ENCODE measurements at regions of chr5 and their contacts with region 1.

Region 1: DNA sequence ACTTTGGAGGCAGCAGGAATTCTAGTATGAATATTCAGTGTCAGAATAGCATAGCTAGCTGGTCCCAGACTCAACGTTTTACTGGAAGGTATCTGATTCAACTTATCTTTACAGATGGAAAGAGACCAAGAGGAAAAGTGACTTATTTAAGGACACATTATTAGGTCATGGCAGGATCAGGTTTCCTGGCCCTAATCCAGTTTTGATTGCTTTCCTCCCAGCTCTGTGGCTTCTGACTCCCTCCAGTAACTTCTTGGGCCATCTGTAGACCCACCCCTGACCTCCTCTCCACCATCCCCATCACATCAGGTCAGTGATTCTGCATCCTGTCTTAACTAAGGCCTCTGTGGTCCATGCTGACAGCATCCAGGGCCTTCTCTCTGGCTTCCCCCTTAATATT is 38.4 kb downstream of the SH3TC2 start:
- DNase-seq: no peak
- H3K4me3 ChIP-seq: no peak overlapping the region
- H3K4me3 Mint-ChIP-seq: no peak overlapping the region
- H3K27ac ChIP-seq: no peak overlapping the region
- H3K27ac Mint-ChIP-seq: no peak overlapping the region
- H3K4me1 ChIP-seq: no peaks in the 10 kb centered on the region
- H3K4me1 Mint-ChIP-seq: no peaks in the 10 kb centered on the region
- H3K27me3 ChIP-seq: no peaks in the 10 kb centered on the region
- H3K27me3 Mint-ChIP-seq: peaks cover 7 to 13% of the 10 kb centered on the region in 2 donors

Region 2: DNA sequence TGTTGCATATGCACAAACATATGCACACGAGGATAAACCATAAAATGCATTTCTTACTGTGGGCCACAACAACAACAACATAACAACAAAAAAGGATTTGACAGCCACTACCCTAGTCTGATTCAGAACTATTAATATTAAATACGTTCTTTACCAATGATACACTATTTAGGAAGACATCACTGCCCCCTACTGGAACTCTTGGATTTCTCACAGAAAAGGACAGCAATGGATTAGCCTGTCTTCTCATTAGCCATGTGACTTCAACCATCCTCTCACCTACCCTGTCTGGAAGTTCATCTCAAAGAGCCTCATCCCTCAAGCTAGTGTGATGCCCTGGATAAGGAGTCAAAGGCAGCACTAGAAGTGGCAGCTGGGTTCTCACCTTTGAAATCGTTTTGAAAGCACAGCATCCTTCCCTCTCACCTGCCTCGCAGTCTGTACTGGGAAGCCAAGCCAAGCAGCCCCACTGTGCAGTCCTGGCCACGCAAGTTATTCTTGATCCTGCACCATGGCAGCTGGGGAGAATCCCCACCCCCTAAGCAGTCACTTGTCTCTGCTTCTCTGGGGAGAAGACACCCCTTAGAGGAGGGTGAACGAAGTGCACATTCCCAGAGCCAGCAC is 26.2 kb before region 1 on chr5:
- CTCF ChIA-PET with region 1: no interaction called
- POLR2A ChIA-PET with region 1: no interaction called
- DNase-seq: peak in 3 of 5 donors; percentile 21 to 39 (median 28)
- H3K4me3 ChIP-seq: no peak overlapping the region
- H3K4me3 Mint-ChIP-seq: no peak overlapping the region
- H3K27ac ChIP-seq: no peak overlapping the region
- H3K27ac Mint-ChIP-seq: no peak overlapping the region
- H3K4me1 ChIP-seq: no peaks in the 10 kb centered on the region
- H3K4me1 Mint-ChIP-seq: peaks cover 0 to 4% (median 1%) of the 10 kb centered on the region in 3 donors
- H3K27me3 ChIP-seq: peaks cover 6% of the 10 kb centered on the region
- H3K27me3 Mint-ChIP-seq: peaks cover 4 to 28% of the 10 kb centered on the region in 2 donors

Region 3: GRCh38 chr5:149035372-149035790 is 10.9 kb after region 1 on chr5:
- CTCF ChIA-PET with region 1: interaction called, 10 read pairs
- POLR2A ChIA-PET with region 1: no interaction called
- DNase-seq: peak; percentile 33 to 77 (median 49)
- H3K4me3 ChIP-seq: no peak overlapping the region
- H3K4me3 Mint-ChIP-seq: peak overlapping the region in 1 of 7 donors; percentile 42
- H3K27ac ChIP-seq: no peak overlapping the region
- H3K27ac Mint-ChIP-seq: no peak overlapping the region
- H3K4me1 ChIP-seq: no peaks in the 10 kb centered on the region
- H3K4me1 Mint-ChIP-seq: peaks cover 4 to 25% (median 6%) of the 10 kb centered on the region in 3 donors
- H3K27me3 ChIP-seq: no peaks in the 10 kb centered on the region
- H3K27me3 Mint-ChIP-seq: peaks cover 2 to 11% of the 10 kb centered on the region in 2 donors